Caco-2 (cell line): ENCODE measurements at regions of chr20 and their contacts with region 1.

Region 1: GRCh38 chr20:39152126-39152525 is 190.0 kb downstream of the DHX35 start:
- DNase-seq: peak; percentile 76 to 90
- H3K4me3 ChIP-seq: no peak overlapping the region
- H3K4me3 Mint-ChIP-seq: no peak overlapping the region
- H3K27ac Mint-ChIP-seq: no peak overlapping the region
- H3K4me1 ChIP-seq: no peaks in the 10 kb centered on the region; the same call in 1 of the 2 replicates
- H3K4me1 Mint-ChIP-seq: peaks cover 10% of the 10 kb centered on the region
- H3K27me3 ChIP-seq: no peaks in the 10 kb centered on the region
- H3K27me3 Mint-ChIP-seq: peaks cover 9% of the 10 kb centered on the region
- CTCF ChIP-seq: no peak

Region 2: GRCh38 chr20:39181490-39181889 is 29.4 kb after region 1 on chr20:
- CTCF ChIA-PET with region 1: interaction called, 15 read pairs
- POLR2A ChIA-PET with region 1: no interaction called
- intact Hi-C with region 1: no loop called
- DNase-seq: no peak
- H3K4me3 ChIP-seq: no peak overlapping the region
- H3K4me3 Mint-ChIP-seq: no peak overlapping the region
- H3K27ac Mint-ChIP-seq: no peak overlapping the region
- H3K4me1 ChIP-seq: no peaks in the 10 kb centered on the region; the same call in 1 of the 2 replicates
- H3K4me1 Mint-ChIP-seq: no peaks in the 10 kb centered on the region
- H3K27me3 ChIP-seq: no peaks in the 10 kb centered on the region
- H3K27me3 Mint-ChIP-seq: peaks cover 4% of the 10 kb centered on the region
- CTCF ChIP-seq: no peak